ENCODE measurements at regions of chr12 and their contacts with region 1.

Region 1: GRCh38 chr12:53352331-53353256 is 16.4 kb upstream of the SP7 start:
- DNase-seq: peak; percentile 83 to 95 (median 87)
- H3K4me3 ChIP-seq: no peak overlapping the region
- H3K27ac ChIP-seq: no peak overlapping the region
- H3K4me1 ChIP-seq: peaks cover 3 to 8% of the 10 kb centered on the region in 2 donors
- H3K27me3 ChIP-seq: no peaks in the 10 kb centered on the region
- CTCF ChIP-seq: peak; percentile 89 to 95 (median 93)
- POLR2A ChIP-seq: no peak

Region 2: GRCh38 chr12:53419761-53420160 is 67.2 kb after region 1 on chr12:
- intact Hi-C with region 1: loop called (anchors 2 kb)
- DNase-seq: no peak
- H3K4me3 ChIP-seq: no peak overlapping the region
- H3K27ac ChIP-seq: no peak overlapping the region
- H3K4me1 ChIP-seq: peaks cover 3 to 22% of the 10 kb centered on the region in 2 donors
- H3K27me3 ChIP-seq: no peaks in the 10 kb centered on the region
- CTCF ChIP-seq: no peak
- POLR2A ChIP-seq: no peak

Region 3: GRCh38 chr12:53441040-53441833 is 88.6 kb after region 1 on chr12 and contains the start of gene PRR13:
- intact Hi-C with region 1: no loop called
- DNase-seq: peak; percentile 99 to 100 (median 99)
- H3K4me3 ChIP-seq: peak within 1 kb of the TSS in 3 of 4 donors; percentile 14 to 66 (median 63)
- H3K27ac ChIP-seq: peak within 1 kb of the TSS; percentile 85 to 98 (median 95)
- H3K4me1 ChIP-seq: peaks cover 12 to 36% of the 10 kb centered on the region in 2 donors
- H3K27me3 ChIP-seq: no peaks in the 10 kb centered on the region
- CTCF ChIP-seq: no peak
- POLR2A ChIP-seq: peak; percentile 87 to 97
- total RNA-seq, gene PRR13: 68.2 to 233 (median 128) TPM

Region 4: DNA sequence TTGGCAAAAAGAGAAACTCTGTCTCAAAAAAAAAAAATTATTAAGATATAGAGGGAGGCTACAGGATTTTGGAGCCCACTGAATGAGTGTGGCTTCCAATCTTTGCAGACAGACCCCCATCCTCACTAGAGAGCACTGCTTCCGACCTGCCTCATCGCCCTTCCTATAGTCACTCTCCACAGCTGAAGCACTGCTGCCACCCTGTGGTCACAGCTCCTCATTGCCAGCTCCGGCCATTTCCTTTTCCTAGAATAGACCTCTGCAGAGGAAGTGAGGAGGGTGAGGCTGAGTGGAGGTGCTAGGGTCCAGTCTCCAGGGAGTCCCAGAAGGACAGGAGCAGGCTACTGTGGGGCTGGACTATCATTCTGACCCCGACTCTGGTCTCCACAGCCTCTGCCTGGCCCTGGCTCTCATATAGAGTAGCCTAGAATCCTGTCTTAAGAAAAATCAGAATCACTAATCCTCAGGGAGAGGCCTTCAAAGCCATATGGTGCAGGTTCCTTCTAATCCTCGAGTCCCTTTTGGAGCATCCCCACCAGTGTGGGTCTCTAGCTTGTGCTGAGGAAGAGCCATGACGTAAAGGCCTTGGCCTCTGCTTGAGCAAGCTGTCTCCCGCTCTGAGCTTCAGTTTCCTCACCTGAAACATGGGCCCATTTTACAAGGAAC is 156.1 kb after region 1 on chr12:
- intact Hi-C with region 1: loop called (anchors 5 to 10 kb)
- DNase-seq: peak; percentile 80 to 95 (median 86)
- H3K4me3 ChIP-seq: no peak overlapping the region
- H3K27ac ChIP-seq: peak overlapping the region in 2 of 5 donors; percentile 29 to 45
- H3K4me1 ChIP-seq: peaks cover 7 to 19% of the 10 kb centered on the region in 2 donors
- H3K27me3 ChIP-seq: no peaks in the 10 kb centered on the region
- CTCF ChIP-seq: peak; percentile 81 to 95 (median 92)
- POLR2A ChIP-seq: no peak

Measured in adrenal gland (tissue), 19 donors.